ENCODE measurements at regions of chr5 and their contacts with region 1.

Region 1: DNA sequence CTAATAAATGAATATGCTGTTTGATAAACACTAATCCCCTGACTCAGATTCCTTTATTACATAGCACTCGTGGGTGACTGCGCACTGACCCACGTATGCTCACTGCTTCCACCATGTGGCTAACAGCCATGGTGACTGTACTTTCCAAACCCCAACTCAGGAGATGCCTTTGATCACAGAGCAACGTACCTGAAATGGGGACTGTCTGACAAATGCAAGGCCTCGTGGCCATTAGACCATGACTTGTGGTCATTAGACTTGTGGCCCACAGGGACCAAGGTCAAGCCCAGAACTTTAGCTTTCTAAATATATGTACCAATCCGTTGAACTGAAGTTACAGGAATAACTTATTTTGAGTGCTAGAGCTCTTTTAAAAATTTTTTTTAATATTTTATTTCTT is 46.6 kb downstream of the CYFIP2 start:
- DNase-seq: peak; percentile 57 to 63
- H3K4me3 ChIP-seq: no peak overlapping the region
- H3K4me3 Mint-ChIP-seq: no peak overlapping the region
- H3K27ac Mint-ChIP-seq: no peak overlapping the region
- H3K4me1 ChIP-seq: no peaks in the 10 kb centered on the region
- H3K4me1 Mint-ChIP-seq: no peaks in the 10 kb centered on the region
- H3K27me3 ChIP-seq: no peaks in the 10 kb centered on the region
- H3K27me3 Mint-ChIP-seq: peaks cover 2% of the 10 kb centered on the region
- CTCF ChIP-seq: peak; percentile 75 to 87

Region 2: DNA sequence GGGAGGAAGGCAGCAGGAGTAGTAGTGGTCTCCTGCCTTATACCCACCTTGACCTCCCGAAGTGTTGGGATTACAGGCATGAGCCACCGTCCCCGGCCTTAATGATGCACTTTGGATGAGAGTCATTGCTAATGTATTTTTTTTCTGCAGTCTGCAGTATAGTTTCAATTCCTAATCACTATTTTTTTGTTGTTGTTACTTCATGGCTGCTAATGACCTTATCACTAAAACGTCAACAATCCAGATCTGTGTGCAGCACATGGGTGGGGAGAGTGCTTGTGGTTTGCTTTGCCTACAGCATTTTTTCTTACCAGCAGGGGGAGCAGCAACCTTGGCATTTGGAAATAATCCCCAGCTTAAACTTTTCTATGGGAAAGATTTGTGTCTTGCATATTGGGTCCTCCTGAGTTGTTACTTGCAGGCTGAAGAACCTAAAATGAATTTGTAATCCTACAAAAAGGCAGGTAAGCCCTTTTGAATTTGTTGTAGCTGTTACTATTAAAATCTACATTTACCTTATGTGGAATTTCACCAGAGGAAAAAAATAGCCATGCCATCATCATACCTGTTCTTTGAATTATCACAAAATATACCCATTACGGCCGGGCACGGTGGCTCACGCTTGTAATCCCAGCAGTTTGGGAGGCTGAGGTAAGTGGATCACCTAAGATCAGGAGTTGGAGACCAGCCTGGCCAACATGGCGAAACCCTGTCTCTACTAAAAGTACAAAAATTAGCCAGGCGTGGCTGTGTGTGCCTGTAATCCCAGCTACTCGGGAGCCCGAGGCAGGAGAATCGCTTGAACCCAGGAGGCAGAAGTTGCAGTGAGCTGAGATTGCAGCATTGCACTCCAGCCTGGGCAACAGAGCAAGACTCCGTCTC is 163.5 kb before region 1 on chr5:
- CTCF ChIA-PET with region 1: interaction called, 4 read pairs
- POLR2A ChIA-PET with region 1: no interaction called
- intact Hi-C with region 1: loop called (anchors 1 kb)
- DNase-seq: peak; percentile 66 to 78
- H3K4me3 ChIP-seq: no peak overlapping the region
- H3K4me3 Mint-ChIP-seq: no peak overlapping the region
- H3K27ac Mint-ChIP-seq: no peak overlapping the region
- H3K4me1 ChIP-seq: no peaks in the 10 kb centered on the region
- H3K4me1 Mint-ChIP-seq: peaks cover 9% of the 10 kb centered on the region
- H3K27me3 ChIP-seq: no peaks in the 10 kb centered on the region
- H3K27me3 Mint-ChIP-seq: peaks cover 6% of the 10 kb centered on the region
- CTCF ChIP-seq: peak; percentile 78 to 88

Region 3: DNA sequence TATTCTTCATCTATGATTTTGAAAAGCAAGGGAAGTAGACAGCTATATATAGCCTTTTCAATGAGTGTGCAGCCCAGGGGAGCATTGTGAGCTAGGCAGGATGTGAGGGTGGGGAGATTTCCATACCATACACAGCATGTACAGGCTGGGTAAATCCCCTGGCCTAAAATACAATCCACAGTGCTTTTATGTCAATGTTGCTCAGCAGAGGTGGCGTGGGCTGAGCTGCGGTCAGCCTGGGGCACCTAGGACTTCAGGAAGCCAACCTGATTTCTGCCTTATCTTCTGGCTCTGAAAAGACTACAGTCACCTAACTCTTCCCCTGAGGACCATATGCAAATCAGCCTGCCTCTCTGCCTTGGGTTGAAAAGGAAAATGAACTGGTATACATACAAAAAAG is 140.1 kb before region 1 on chr5:
- CTCF ChIA-PET with region 1: no interaction called
- POLR2A ChIA-PET with region 1: no interaction called
- intact Hi-C with region 1: no loop called
- DNase-seq: no peak
- H3K4me3 ChIP-seq: no peak overlapping the region
- H3K4me3 Mint-ChIP-seq: no peak overlapping the region
- H3K27ac Mint-ChIP-seq: no peak overlapping the region
- H3K4me1 ChIP-seq: no peaks in the 10 kb centered on the region
- H3K4me1 Mint-ChIP-seq: no peaks in the 10 kb centered on the region
- H3K27me3 ChIP-seq: no peaks in the 10 kb centered on the region; the same call in 1 of the 2 replicates
- H3K27me3 Mint-ChIP-seq: peaks cover 14% of the 10 kb centered on the region
- CTCF ChIP-seq: no peak

Region 4: GRCh38 chr5:157241483-157241882 is 71.0 kb before region 1 on chr5:
- CTCF ChIA-PET with region 1: no interaction called
- POLR2A ChIA-PET with region 1: no interaction called
- intact Hi-C with region 1: no loop called
- DNase-seq: no peak
- H3K4me3 ChIP-seq: no peak overlapping the region
- H3K4me3 Mint-ChIP-seq: no peak overlapping the region
- H3K27ac Mint-ChIP-seq: no peak overlapping the region
- H3K4me1 ChIP-seq: peaks cover 4% of the 10 kb centered on the region; the same call in 1 of the 2 replicates
- H3K4me1 Mint-ChIP-seq: no peaks in the 10 kb centered on the region
- H3K27me3 ChIP-seq: no peaks in the 10 kb centered on the region
- H3K27me3 Mint-ChIP-seq: peaks cover 8% of the 10 kb centered on the region
- CTCF ChIP-seq: no peak

Region 5: GRCh38 chr5:157253547-157253946 is 58.9 kb before region 1 on chr5:
- CTCF ChIA-PET with region 1: interaction called, 8 read pairs
- POLR2A ChIA-PET with region 1: no interaction called
- intact Hi-C with region 1: loop called (anchors 1 kb)
- DNase-seq: peak in 1 of 2 experiments; percentile 70
- H3K4me3 ChIP-seq: no peak overlapping the region
- H3K4me3 Mint-ChIP-seq: no peak overlapping the region
- H3K27ac Mint-ChIP-seq: no peak overlapping the region
- H3K4me1 ChIP-seq: no peaks in the 10 kb centered on the region
- H3K4me1 Mint-ChIP-seq: no peaks in the 10 kb centered on the region
- H3K27me3 ChIP-seq: no peaks in the 10 kb centered on the region
- H3K27me3 Mint-ChIP-seq: peaks cover 8% of the 10 kb centered on the region
- CTCF ChIP-seq: peak; percentile 89 to 92

Region 6: DNA sequence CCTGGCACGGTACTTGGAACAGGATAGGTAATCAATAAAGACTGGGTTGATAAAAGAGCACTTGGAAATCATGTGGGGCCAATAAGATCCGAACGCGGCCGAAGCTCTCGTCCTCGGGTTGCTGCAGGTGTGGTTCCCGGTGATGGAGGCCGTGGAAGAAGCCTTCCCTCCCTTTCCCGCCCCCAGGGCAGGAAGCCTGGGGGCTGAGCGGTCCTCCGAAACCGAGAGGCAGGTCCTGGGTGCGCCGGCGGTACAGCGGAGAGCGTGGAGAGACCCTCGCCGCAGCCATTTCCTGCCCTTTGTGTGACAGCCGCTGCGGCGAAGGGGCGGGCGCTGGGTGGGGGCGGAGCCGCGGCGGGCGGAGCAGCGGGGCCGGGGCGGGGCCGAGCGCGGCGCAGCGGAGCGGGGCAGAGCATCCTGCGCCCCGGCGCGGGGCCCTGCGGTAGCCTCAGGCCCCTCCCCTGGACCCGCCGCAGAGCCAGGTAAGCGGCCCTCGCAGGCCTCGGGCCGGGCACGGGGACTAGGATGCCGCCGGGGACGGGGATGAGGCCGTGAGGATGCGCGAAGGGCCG is 46.7 kb before region 1 on chr5 and contains the start of gene CYFIP2:
- CTCF ChIA-PET with region 1: no interaction called
- POLR2A ChIA-PET with region 1: no interaction called
- intact Hi-C with region 1: loop called (anchors 5 kb)
- DNase-seq: peak in 1 of 2 experiments; percentile 66
- H3K4me3 ChIP-seq: peak within 1 kb of the TSS; percentile 64
- H3K4me3 Mint-ChIP-seq: peak within 1 kb of the TSS; percentile 83
- H3K27ac Mint-ChIP-seq: no peak within 1 kb of the TSS
- H3K4me1 ChIP-seq: no peaks in the 10 kb centered on the region
- H3K4me1 Mint-ChIP-seq: no peaks in the 10 kb centered on the region
- H3K27me3 ChIP-seq: no peaks in the 10 kb centered on the region; the same call in 1 of the 2 replicates
- H3K27me3 Mint-ChIP-seq: peaks cover 17% of the 10 kb centered on the region
- CTCF ChIP-seq: no peak
- total RNA-seq, gene CYFIP2: 10.2 and 14.3 TPM in 2 replicates

Region 7: DNA sequence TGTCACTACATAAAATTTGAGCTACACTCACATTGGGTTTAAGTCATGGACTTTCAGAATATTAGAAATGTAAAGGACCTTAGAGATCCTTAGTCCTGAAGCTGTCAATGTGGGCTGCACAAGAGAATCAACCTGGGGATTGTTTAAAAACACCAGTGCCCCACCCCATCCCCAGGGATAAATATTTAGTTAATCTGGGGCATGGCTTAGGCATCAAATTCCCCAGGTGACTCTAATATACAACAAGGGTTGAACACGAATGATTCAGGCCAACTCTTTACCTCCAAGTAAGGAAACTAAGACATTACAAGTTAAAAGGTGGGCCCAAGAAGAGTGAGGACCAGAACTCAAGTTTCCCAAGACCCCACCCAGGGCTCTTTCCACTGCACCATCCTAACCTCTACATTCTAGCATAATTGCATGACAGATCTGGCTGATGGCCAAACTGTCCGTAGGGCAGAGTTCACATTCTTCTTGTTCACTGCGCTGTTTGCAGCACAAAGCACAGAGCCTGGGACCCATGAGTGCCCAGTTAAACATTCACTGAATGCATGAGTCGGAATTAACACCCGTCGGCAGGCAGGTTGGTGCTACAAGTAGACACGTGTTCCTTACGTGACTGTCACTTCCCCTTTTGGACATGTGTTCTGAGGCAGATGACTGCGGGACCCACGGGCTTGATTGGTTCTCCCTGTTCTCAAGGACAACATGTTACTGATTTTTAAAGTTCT is 21.3 kb before region 1 on chr5:
- CTCF ChIA-PET with region 1: no interaction called
- POLR2A ChIA-PET with region 1: no interaction called
- intact Hi-C with region 1: loop called (anchors 1 kb)
- DNase-seq: peak; percentile 79 to 92
- H3K4me3 ChIP-seq: no peak overlapping the region
- H3K4me3 Mint-ChIP-seq: peak overlapping the region; percentile 49
- H3K27ac Mint-ChIP-seq: peak overlapping the region; percentile 77
- H3K4me1 ChIP-seq: peaks cover 37% of the 10 kb centered on the region
- H3K4me1 Mint-ChIP-seq: peaks cover 40% of the 10 kb centered on the region
- H3K27me3 ChIP-seq: no peaks in the 10 kb centered on the region
- H3K27me3 Mint-ChIP-seq: no peaks in the 10 kb centered on the region
- CTCF ChIP-seq: no peak

Region 8: DNA sequence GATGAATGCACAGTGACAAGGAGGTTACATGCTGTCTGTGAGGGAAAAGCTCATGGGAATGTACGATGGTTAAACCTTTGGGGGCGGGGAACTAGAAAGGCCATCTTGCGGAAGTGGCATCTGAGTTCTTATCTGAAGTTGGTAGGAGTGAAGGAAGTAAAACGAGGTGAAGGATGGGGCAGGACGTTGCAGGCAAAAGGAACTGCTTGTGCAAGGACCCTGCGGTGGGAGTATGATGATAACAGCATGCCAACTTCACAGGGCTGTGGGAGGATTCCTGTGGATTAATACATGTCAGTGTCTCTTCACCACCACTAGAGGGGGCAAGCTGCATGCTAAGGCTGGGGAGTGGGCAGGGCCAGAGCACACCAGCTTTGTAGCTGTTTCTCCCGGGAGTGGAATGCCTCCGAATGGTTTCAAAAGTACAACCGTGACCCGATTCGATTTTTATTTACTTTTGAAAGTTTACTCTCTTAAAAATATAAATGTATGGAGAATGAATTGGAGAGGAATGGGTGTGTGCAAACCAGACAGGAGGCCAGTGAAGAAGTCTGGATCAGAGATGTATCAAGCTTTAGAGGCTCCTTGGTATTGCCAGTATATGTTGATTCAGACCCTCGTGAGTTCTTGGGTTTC is 15.9 kb after region 1 on chr5:
- CTCF ChIA-PET with region 1: interaction called, 3 read pairs
- POLR2A ChIA-PET with region 1: no interaction called
- intact Hi-C with region 1: loop called (anchors 1 kb)
- DNase-seq: peak; percentile 68 to 78
- H3K4me3 ChIP-seq: 0 out of 2 replicates have a peak overlapping the region, but pooled peaks have one; percentile 10
- H3K4me3 Mint-ChIP-seq: peak overlapping the region; percentile 39
- H3K27ac Mint-ChIP-seq: no peak overlapping the region
- H3K4me1 ChIP-seq: peaks cover 30% of the 10 kb centered on the region
- H3K4me1 Mint-ChIP-seq: peaks cover 21% of the 10 kb centered on the region
- H3K27me3 ChIP-seq: no peaks in the 10 kb centered on the region
- H3K27me3 Mint-ChIP-seq: no peaks in the 10 kb centered on the region
- CTCF ChIP-seq: peak; percentile 86 to 94

Region 9: DNA sequence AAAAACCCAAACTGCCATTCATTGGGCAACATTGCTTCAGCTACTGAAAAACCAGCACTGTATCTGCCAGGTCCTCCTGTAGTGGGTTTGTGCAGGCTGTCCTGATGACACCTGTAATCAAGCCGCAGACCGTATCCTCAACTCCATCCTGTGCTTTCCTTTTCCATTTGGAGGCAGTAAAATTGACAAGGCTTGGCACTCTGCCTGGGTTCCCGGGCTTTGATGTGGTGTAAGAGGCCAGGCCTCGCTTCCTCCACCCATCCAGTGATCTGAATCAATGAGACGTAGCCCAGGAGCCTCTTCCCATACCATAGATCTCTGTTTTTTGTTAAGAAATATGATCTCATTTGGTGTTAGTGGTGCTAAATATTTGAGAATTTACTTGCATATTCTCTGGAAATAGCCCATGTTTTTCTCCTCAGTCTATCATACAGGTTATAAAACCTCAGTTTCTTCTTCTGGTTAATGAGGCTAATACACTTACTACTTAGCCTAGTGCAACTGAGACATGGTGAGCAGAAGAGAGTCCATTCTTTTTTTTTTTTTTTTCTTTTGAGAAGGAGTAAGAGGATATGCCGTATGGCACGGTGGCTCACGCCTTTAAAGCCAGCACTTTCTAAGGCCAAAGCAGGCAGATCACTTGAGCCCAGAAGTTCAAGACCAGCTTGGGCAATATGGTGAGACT is 465.8 kb after region 1 on chr5:
- CTCF ChIA-PET with region 1: no interaction called
- POLR2A ChIA-PET with region 1: no interaction called
- intact Hi-C with region 1: no loop called
- DNase-seq: no peak
- H3K4me3 ChIP-seq: no peak overlapping the region
- H3K4me3 Mint-ChIP-seq: no peak overlapping the region
- H3K27ac Mint-ChIP-seq: no peak overlapping the region
- H3K4me1 ChIP-seq: no peaks in the 10 kb centered on the region
- H3K4me1 Mint-ChIP-seq: no peaks in the 10 kb centered on the region
- H3K27me3 ChIP-seq: no peaks in the 10 kb centered on the region
- H3K27me3 Mint-ChIP-seq: no peaks in the 10 kb centered on the region
- CTCF ChIP-seq: no peak